CD14-positive monocyte (primary cell): ENCODE measurements at regions of chr22 and their contacts with region 1.

Region 1: GRCh38 chr22:18077639-18078328 is at the start of gene PEX26:
- DNase-seq: peak; percentile 95 to 96 (median 95)
- H3K4me3 ChIP-seq: peak within 1 kb of the TSS; percentile 59 to 100 (median 98)
- H3K4me3 Mint-ChIP-seq: peak within 1 kb of the TSS; percentile 94 to 98
- H3K27ac ChIP-seq: peak within 1 kb of the TSS; percentile 55 to 99
- H3K27ac Mint-ChIP-seq: peak within 1 kb of the TSS; percentile 95 to 98 (median 97)
- H3K4me1 ChIP-seq: peaks cover 26 to 27% of the 10 kb centered on the region in 2 donors
- H3K4me1 Mint-ChIP-seq: peaks cover 26% of the 10 kb centered on the region
- H3K27me3 ChIP-seq: no peaks in the 10 kb centered on the region
- H3K27me3 Mint-ChIP-seq: peaks cover 0 to 2% (median 0%) of the 10 kb centered on the region in 3 donors
- CTCF ChIP-seq: no peak
- polyA plus RNA-seq, gene PEX26: 3.4 to 8.6 (median 3.7) TPM

Region 2: GRCh38 chr22:17077255-17077654 is 1000.5 kb before region 1 on chr22:
- intact Hi-C with region 1: loop called (anchors 5 to 10 kb)
- DNase-seq: no peak
- H3K4me3 ChIP-seq: no peak overlapping the region
- H3K4me3 Mint-ChIP-seq: no peak overlapping the region
- H3K27ac ChIP-seq: no peak overlapping the region
- H3K27ac Mint-ChIP-seq: peak overlapping the region in 4 of 7 donors; percentile 35 to 88 (median 68)
- H3K4me1 ChIP-seq: peaks cover 33 to 42% of the 10 kb centered on the region in 2 donors
- H3K4me1 Mint-ChIP-seq: peaks cover 40% of the 10 kb centered on the region
- H3K27me3 ChIP-seq: no peaks in the 10 kb centered on the region
- H3K27me3 Mint-ChIP-seq: peaks cover 2 to 5% (median 4%) of the 10 kb centered on the region in 3 donors
- CTCF ChIP-seq: no peak

Region 3: GRCh38 chr22:17084554-17085276 is 993.1 kb before region 1 on chr22 and contains the start of gene IL17RA:
- intact Hi-C with region 1: loop called (anchors 5 to 10 kb)
- DNase-seq: peak; percentile 84 to 90 (median 86)
- H3K4me3 ChIP-seq: peak within 1 kb of the TSS; percentile 89 to 91 (median 91)
- H3K4me3 Mint-ChIP-seq: peak within 1 kb of the TSS; percentile 96 to 99
- H3K27ac ChIP-seq: peak within 1 kb of the TSS; percentile 81 to 92
- H3K27ac Mint-ChIP-seq: peak within 1 kb of the TSS; percentile 90 to 96 (median 95)
- H3K4me1 ChIP-seq: peaks cover 40 to 50% of the 10 kb centered on the region in 2 donors
- H3K4me1 Mint-ChIP-seq: peaks cover 56% of the 10 kb centered on the region
- H3K27me3 ChIP-seq: no peaks in the 10 kb centered on the region
- H3K27me3 Mint-ChIP-seq: peaks cover 0 to 2% (median 0%) of the 10 kb centered on the region in 3 donors
- CTCF ChIP-seq: no peak
- polyA plus RNA-seq, gene IL17RA: 68.3 to 118 (median 96.7) TPM

Region 4: GRCh38 chr22:17514084-17514483 is 563.7 kb before region 1 on chr22:
- intact Hi-C with region 1: loop called in 1 of 2 experiments (anchors 5 kb)
- DNase-seq: no peak
- H3K4me3 ChIP-seq: no peak overlapping the region
- H3K4me3 Mint-ChIP-seq: no peak overlapping the region
- H3K27ac ChIP-seq: no peak overlapping the region
- H3K27ac Mint-ChIP-seq: no peak overlapping the region
- H3K4me1 ChIP-seq: no peaks in the 10 kb centered on the region
- H3K4me1 Mint-ChIP-seq: no peaks in the 10 kb centered on the region
- H3K27me3 ChIP-seq: no peaks in the 10 kb centered on the region
- H3K27me3 Mint-ChIP-seq: peaks cover 9 to 16% (median 12%) of the 10 kb centered on the region in 3 donors
- CTCF ChIP-seq: no peak

Region 5: GRCh38 chr22:17742527-17742902 is 335.3 kb before region 1 on chr22:
- intact Hi-C with region 1: loop called in 1 of 2 experiments (anchors 10 kb)
- DNase-seq: peak; percentile 44 to 65 (median 58)
- H3K4me3 ChIP-seq: no peak overlapping the region
- H3K4me3 Mint-ChIP-seq: no peak overlapping the region
- H3K27ac ChIP-seq: peak overlapping the region in 1 of 2 donors; percentile 68
- H3K27ac Mint-ChIP-seq: peak overlapping the region in 4 of 7 donors; percentile 33 to 61 (median 40)
- H3K4me1 ChIP-seq: no peaks in the 10 kb centered on the region
- H3K4me1 Mint-ChIP-seq: no peaks in the 10 kb centered on the region
- H3K27me3 ChIP-seq: no peaks in the 10 kb centered on the region
- H3K27me3 Mint-ChIP-seq: no peaks in the 10 kb centered on the region
- CTCF ChIP-seq: peak; percentile 88

Region 6: DNA sequence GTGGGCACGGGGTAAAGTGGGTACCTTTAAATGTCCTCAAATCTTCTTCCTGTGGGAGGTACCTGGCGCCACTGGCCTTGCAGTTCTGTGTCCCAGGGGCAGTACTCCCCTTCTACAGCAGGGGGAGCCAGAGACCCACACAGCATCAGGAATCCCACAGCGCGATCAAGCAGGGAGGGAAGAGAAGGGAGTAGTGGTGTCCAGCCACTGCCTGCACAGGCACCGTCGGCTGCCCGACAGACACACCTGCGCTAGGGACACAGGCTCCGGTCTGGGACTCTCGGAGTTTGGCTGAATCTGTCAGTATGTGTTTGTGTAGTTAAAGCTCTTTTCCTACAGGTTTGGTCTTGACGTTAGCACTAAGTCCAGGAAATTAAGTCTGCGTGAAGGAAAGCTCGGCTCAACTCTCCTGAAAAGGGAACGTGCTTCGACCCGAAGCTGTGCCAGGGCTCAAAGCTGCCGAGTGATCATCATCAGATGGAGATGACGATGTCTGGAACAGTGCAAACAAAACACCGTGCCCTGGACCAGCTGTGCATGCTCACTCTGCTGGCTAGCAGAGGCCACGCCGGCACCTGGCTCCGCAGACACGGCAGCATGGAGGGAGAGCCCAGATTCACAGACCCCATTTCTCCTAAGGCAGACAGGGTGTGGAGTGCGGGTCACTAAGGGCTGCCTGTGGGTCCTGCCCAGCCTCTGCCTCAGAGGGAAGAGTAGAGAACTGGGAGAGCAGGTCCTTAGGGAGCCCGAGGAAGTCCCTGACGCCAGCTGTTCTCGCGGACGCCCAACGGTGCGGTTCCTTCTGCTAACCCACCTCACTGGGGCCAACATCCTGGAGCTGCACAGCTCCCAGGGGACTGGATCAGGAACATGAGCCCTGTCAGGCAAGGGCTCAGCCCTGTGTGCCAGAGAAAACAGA is 247.5 kb before region 1 on chr22:
- intact Hi-C with region 1: loop called (anchors 1 to 2 kb)
- DNase-seq: peak; percentile 54 to 67 (median 59)
- H3K4me3 ChIP-seq: no peak overlapping the region
- H3K4me3 Mint-ChIP-seq: no peak overlapping the region
- H3K27ac ChIP-seq: no peak overlapping the region
- H3K27ac Mint-ChIP-seq: no peak overlapping the region
- H3K4me1 ChIP-seq: no peaks in the 10 kb centered on the region
- H3K4me1 Mint-ChIP-seq: no peaks in the 10 kb centered on the region
- H3K27me3 ChIP-seq: no peaks in the 10 kb centered on the region
- H3K27me3 Mint-ChIP-seq: peaks cover 0 to 3% (median 0%) of the 10 kb centered on the region in 3 donors
- CTCF ChIP-seq: peak; percentile 98